ENCODE measurements at regions of chr6 and their contacts with region 1.

Region 1: GRCh38 chr6:97705568-97705967 is 422.6 kb upstream of the MMS22L start:
- DNase-seq: peak; percentile 55
- H3K4me3 ChIP-seq: no peak overlapping the region
- H3K27ac ChIP-seq: no peak overlapping the region
- H3K4me1 ChIP-seq: peaks cover 15% of the 10 kb centered on the region
- H3K27me3 ChIP-seq: no peaks in the 10 kb centered on the region
- CTCF ChIP-seq: peak; percentile 67

Region 2: DNA sequence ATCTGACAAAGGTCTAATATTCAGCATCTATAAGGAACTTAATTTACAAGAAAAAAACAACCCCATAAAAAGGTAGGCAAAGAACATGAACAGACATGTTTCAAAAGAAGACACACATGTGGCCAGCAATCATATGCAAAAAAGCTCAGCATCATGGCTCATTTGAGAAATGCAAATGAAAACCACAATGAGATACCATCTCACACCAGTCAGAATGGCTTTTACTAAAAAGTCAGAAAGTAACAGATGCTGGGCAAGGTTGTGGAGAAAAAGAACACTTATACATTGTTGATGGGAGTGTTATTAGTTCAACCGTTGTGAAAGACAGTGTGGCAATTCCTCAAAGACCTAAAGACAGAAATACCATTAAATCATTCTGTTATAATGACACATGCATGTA is 132.6 kb before region 1 on chr6:
- CTCF ChIA-PET with region 1: no interaction called
- POLR2A ChIA-PET with region 1: no interaction called
- intact Hi-C with region 1: no loop called
- DNase-seq: no peak
- H3K4me3 ChIP-seq: no peak overlapping the region
- H3K27ac ChIP-seq: no peak overlapping the region
- H3K4me1 ChIP-seq: no peaks in the 10 kb centered on the region
- H3K27me3 ChIP-seq: no peaks in the 10 kb centered on the region
- CTCF ChIP-seq: no peak

Region 3: GRCh38 chr6:98039869-98040607 is 334.5 kb after region 1 on chr6:
- CTCF ChIA-PET with region 1: no interaction called
- POLR2A ChIA-PET with region 1: no interaction called
- intact Hi-C with region 1: loop called (anchors 5 kb)
- DNase-seq: peak; percentile 63
- H3K4me3 ChIP-seq: no peak overlapping the region
- H3K27ac ChIP-seq: no peak overlapping the region
- H3K4me1 ChIP-seq: peaks cover 9% of the 10 kb centered on the region
- H3K27me3 ChIP-seq: no peaks in the 10 kb centered on the region
- CTCF ChIP-seq: peak; percentile 81